ENCODE measurements at regions of chr10 and their contacts with region 1.

Region 1: DNA sequence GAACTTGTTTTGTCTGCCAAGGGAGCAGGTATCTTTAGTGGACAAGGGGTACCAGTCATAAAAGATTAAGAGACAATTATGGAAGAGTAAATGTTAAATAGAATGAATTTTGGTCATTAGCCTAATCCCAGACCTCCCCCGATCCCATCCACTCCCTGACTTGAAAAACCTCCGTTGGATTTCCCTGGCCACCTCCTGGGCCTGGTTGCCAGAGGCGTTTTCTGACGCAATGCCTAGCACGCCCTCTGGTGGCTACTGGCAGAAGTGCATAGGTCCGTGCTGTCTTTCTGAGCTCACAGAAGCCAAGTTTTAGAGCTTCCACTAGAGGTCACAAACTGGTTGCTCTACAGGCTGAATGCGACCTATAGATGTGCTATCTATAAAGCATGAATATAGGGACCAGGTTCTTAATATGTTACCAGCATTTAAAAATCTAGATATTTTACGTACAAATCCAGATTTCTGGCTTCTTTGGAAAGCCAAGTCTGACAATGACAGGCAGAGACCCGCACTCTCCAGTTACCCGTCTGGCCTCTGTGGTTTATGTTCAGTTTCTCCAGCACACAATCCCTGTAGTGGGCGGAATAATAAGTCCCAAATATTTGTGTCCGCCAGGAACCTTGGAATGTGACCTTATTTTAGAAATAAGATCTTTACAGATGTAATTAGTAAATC is 39.8 kb downstream of the SPOCK2 start:
- DNase-seq: peak; percentile 88 to 98 (median 96)
- ATAC-seq: peak; percentile 99
- H3K4me3 ChIP-seq: no peak overlapping the region
- H3K4me1 ChIP-seq: no peaks in the 10 kb centered on the region
- CTCF ChIP-seq: peak; percentile 100

Region 2: GRCh38 chr10:71753091-71753959 is 295.3 kb before region 1 on chr10:
- intact Hi-C with region 1: no loop called
- DNase-seq: peak; percentile 38 to 66 (median 66)
- ATAC-seq: peak; percentile 1
- H3K4me3 ChIP-seq: no peak overlapping the region
- H3K4me1 ChIP-seq: peaks cover 37% of the 10 kb centered on the region
- CTCF ChIP-seq: no peak

Region 3: DNA sequence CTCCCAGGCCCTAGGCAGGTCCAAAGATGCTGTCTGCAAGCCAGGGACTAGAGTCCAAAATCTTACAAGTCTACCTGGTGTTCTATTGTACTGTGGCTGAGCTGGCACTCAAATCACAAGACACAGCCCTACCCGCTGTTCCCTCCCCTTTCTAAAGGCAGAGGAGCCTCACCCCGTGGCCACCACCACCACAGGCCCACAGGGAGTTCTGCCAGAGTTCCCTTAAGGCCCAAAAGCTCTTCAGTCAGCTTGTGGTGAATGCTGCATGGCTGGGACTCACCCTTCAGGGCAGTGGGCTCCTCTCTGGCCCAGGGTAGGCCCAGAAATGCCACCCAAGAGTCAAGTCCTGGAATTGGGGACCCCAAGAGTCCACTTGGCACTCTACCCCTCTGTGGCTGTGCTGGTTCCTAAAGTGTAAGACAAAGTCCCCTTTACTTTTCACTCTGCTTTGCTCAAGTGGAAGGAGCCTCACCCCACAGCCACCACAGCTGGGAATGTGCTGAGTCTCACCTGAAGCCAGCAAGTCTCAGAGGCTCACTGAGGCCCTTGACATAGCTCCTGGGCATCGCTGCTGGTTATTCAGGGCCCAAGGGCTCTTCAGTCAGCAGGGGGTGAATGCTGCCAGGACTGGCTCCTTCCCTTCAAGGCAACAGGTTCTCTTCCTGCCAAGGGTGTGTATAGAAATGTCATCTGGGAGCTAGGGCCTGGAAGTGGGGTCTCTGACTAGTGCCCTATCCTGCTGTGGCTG is 148.7 kb before region 1 on chr10:
- intact Hi-C with region 1: loop called in 1 of 2 experiments (anchors 5 kb)
- DNase-seq: no peak
- ATAC-seq: no peak
- H3K4me3 ChIP-seq: no peak overlapping the region
- H3K4me1 ChIP-seq: no peaks in the 10 kb centered on the region
- CTCF ChIP-seq: no peak

Region 4: GRCh38 chr10:71957546-71958275 is 90.9 kb before region 1 on chr10:
- intact Hi-C with region 1: loop called (anchors 5 kb)
- DNase-seq: no peak
- ATAC-seq: no peak
- H3K4me3 ChIP-seq: no peak overlapping the region
- H3K4me1 ChIP-seq: no peaks in the 10 kb centered on the region
- CTCF ChIP-seq: no peak

Measured in mucosa of descending colon (tissue), 3 donors.